Activated B cell treated with CpG ODN at 0.5 μM for 24 hours (primary cell): ENCODE measurements at regions of chr2 and their contacts with region 1.

Region 1: DNA sequence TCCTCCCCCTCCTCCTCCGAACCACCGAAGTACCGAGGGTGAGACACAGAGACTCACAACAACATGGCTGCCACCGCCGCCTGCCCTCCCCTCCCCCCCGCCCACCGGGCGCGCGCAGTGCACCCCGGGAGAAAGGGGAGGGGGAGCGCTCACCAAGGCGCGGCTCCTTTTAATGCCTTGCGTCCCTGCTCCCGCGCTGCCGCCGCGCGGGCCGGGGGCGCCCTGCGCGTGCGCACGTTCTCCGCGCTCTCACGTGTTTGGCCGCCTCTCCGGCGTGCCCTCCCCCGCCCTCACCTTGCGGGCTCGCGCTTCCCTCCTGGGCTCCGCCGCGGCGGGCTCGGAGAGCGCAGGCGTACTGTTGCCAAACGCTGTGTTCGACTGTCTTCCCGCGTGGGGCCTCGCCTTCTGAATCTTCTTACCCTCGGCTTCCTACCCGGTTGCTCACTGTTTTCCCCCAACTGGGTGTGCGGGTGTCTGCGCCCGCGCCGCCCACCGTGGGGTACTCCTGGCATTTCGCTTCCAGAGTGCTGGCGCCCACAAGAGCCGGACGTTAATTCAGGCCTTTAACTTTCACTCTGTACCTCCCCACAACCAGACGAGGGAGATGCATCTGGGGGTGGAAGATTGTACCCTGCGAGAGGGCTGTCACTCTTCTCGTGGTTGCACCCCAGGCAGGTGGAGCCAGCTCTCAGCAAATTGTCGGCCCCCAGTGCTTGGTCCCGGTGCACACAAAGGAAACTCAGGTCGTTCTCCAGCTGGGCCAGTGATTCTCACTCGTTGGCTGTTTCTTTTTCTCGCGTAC is at the start of gene PUM2:
- DNase-seq: peak; percentile 96
- ATAC-seq: peak; percentile 83
- H3K4me3 Mint-ChIP-seq: peak within 1 kb of the TSS; percentile 92
- H3K27ac Mint-ChIP-seq: peak within 1 kb of the TSS; percentile 86
- H3K4me1 Mint-ChIP-seq: peaks cover 38% of the 10 kb centered on the region
- H3K27me3 Mint-ChIP-seq: no peaks in the 10 kb centered on the region
- CTCF ChIP-seq: no peak
- total RNA-seq, gene PUM2: 94.9 and 110 TPM in 2 replicates

Region 2: DNA sequence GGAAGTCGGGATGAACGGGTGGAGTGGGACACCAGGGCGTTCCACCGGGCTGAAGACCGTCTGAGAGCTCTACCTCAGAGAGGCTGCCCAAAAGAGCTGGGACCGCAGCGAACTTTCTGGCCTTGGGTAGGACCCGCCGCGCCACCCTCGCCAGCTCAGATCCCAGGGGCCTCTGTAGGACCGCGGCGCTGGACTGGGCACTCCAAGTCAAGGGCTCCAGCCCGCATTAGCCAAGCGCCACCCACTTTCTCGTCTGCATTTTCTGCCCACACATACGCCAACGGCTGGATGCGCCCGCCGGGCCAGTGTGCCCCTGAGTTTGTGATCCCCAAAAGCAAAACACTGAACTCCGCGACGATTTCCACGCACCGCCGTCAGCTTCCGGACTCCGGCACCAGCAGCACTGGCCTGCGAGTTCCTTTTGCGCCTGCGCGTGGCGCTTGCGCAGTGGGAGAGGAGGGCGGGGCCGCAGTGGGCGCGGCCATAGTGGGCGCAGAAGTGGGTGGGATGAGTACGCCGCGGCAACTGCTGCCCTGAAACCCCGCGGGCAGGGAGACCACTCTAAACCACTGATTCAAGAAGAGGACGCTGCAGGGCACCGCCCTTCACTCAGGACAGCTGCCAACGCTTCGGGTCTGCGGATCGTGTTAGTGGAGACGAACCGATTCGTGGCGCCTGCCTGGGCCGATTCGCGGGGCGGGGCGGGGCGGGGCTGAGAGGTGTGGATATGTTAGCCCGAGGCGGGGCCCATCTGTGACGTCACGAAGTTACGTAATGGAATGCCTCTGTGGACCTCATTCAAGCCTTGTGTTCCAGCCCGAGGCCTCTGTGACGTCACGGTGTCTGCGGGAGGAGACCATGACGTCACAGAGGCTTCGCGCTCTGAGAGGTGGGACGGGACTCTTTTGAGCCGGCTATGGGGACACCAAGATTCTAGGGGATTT is 1003.1 kb before region 1 on chr2:
- CTCF ChIA-PET with region 1: no interaction called
- POLR2A ChIA-PET with region 1: no interaction called
- intact Hi-C with region 1: loop called (anchors 5 kb)
- DNase-seq: peak; percentile 100
- ATAC-seq: peak; percentile 89
- H3K4me3 Mint-ChIP-seq: peak overlapping the region; percentile 98
- H3K27ac Mint-ChIP-seq: peak overlapping the region; percentile 98
- H3K4me1 Mint-ChIP-seq: peaks cover 35% of the 10 kb centered on the region
- H3K27me3 Mint-ChIP-seq: peaks cover 28% of the 10 kb centered on the region
- CTCF ChIP-seq: no peak

Region 3: DNA sequence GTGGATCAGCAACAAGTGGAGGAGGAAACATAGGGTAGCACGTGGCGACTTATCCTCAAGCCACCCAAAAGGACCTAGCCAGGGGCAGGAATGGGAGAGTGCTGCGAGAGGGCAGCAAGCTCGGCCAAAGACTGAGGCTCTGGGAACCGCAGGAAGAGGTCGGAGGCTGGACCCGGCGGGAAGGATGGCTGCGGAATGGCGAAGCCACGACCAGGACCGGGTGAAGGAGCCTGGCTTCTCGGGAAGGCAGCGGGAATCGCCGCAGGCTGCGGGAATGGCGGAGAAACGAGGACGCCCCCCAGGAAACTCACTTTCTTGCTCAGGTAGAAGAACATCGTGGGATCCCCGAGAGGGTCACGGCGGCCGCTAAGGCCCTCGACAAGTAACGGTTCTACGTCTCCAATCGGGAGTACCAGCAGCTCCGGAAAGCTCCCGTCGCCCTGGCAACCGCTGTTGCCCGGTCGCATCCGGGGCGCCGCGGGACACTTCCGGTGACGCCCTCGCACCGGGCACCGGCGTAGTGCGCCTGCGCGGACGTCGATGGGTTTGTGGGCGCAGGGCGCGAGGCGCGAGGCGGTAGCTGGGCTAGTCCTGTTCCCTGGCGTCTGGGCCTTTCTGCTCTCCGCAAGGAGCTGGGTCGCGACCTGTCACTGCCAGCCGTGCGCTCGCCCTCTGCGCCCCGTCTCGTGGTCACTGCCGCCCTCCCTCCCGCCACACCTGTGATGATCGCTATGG is 361.1 kb before region 1 on chr2 and contains the start of gene WDR35:
- CTCF ChIA-PET with region 1: no interaction called
- POLR2A ChIA-PET with region 1: no interaction called
- intact Hi-C with region 1: loop called (anchors 5 kb)
- DNase-seq: peak; percentile 93
- ATAC-seq: peak; percentile 89
- H3K4me3 Mint-ChIP-seq: peak within 1 kb of the TSS; percentile 91
- H3K27ac Mint-ChIP-seq: peak within 1 kb of the TSS; percentile 85
- H3K4me1 Mint-ChIP-seq: peaks cover 31% of the 10 kb centered on the region
- H3K27me3 Mint-ChIP-seq: peaks cover 18% of the 10 kb centered on the region
- CTCF ChIP-seq: no peak
- total RNA-seq, gene WDR35: 8.1 and 8.2 TPM in 2 replicates

Region 4: DNA sequence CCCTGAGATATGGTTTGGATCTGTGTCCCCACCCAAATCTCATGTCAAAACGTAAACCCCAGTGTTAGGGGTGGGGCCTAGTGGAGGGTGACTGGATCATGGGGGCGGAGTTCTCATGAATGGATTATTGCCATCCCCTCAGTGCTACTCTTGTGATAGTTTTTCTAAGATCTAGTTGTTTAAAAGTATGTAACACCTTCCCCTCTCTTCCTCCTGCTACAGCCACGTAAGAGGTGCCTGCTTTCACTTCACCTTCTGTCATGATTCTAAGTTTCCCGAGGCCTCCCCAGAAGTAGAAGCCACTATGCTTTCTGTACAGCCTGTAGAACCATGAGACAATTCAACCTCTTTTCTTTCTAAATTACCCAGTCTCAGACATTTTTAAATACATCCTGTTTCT is 17.2 kb before region 1 on chr2:
- CTCF ChIA-PET with region 1: interaction called, 4 read pairs
- POLR2A ChIA-PET with region 1: interaction called, 4 read pairs
- intact Hi-C with region 1: loop called (anchors 1 kb)
- DNase-seq: no peak
- ATAC-seq: peak; percentile 74
- H3K4me3 Mint-ChIP-seq: peak overlapping the region; percentile 66
- H3K27ac Mint-ChIP-seq: peak overlapping the region; percentile 86
- H3K4me1 Mint-ChIP-seq: peaks cover 92% of the 10 kb centered on the region
- H3K27me3 Mint-ChIP-seq: no peaks in the 10 kb centered on the region
- CTCF ChIP-seq: no peak

Region 5: DNA sequence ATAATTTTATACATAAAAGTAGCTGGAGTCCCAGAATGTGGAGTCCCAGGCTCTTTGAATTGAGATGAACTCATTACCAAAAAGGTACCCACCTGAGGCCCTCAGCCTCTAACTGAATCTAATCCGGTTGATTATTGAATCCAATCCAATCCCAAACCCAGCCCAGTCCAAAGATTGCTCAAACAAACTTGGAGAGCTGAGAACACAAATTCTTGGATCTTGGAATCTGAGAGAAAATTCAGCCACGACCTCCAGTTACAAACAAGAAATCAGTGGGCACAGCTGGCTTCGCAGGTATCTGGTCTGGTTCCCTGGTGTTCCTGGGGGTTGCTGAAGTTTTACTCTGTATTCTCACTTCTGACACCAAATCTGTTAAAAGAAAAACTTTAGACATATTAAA is 67.6 kb after region 1 on chr2:
- CTCF ChIA-PET with region 1: no interaction called
- POLR2A ChIA-PET with region 1: no interaction called
- intact Hi-C with region 1: no loop called
- DNase-seq: no peak
- ATAC-seq: no peak
- H3K4me3 Mint-ChIP-seq: no peak overlapping the region
- H3K27ac Mint-ChIP-seq: no peak overlapping the region
- H3K4me1 Mint-ChIP-seq: peaks cover 7% of the 10 kb centered on the region
- H3K27me3 Mint-ChIP-seq: peaks cover 6% of the 10 kb centered on the region
- CTCF ChIP-seq: no peak

Region 6: DNA sequence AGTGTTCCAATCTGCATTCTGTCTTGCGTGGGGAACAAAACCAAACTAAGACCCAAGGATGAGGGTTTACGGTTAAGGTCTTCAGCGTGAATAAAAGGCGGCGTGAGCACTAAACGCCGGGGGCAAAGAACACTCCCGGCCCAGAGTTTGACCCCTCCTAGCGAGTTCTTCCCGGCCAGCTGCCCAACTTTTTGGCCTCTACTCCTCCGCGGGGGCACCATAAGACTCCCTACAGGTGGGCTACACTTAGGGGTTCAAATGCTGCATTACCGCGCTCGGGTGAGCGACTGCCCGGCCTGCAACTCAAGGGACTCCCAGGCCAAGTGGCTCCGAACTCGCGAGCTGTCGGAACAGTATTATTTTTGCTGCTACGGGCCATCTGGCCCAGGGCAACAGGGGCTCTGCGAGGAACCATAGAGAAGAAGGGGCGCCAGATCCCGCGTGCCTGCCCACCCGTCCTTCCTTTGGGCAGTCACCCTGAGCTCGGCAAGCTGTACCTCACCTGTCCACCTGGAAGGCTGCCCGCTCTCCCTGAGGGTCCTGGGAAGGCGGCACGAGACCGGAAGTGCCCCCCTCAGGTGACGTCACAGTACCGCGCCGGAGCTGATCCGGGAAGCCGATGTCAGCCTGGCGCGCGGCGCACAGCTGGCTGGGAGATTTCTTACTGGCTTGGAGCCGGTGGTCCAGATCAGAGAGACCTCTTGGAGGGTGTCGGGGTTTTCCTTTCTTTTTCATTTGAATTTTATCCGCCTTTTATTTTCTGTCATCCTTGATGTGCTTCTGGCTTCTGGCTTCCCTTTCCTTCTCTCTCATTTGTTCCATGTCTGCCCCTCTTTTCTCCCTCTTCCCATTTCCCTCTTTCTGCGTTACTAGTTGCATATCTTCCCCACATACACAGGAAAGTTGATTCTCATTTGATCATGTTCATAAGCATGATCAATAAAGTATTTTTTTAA is 471.9 kb after region 1 on chr2 and contains the start of gene LDAH:
- CTCF ChIA-PET with region 1: no interaction called
- POLR2A ChIA-PET with region 1: no interaction called
- intact Hi-C with region 1: loop called (anchors 2 kb)
- DNase-seq: peak; percentile 84
- ATAC-seq: peak; percentile 83
- H3K4me3 Mint-ChIP-seq: peak within 1 kb of the TSS; percentile 97
- H3K27ac Mint-ChIP-seq: peak within 1 kb of the TSS; percentile 97
- H3K4me1 Mint-ChIP-seq: peaks cover 21% of the 10 kb centered on the region
- H3K27me3 Mint-ChIP-seq: no peaks in the 10 kb centered on the region
- CTCF ChIP-seq: no peak
- total RNA-seq, gene LDAH: 31.2 and 31.7 TPM in 2 replicates